ENCODE measurements at regions of chr6 and their contacts with region 1.

Region 1: DNA sequence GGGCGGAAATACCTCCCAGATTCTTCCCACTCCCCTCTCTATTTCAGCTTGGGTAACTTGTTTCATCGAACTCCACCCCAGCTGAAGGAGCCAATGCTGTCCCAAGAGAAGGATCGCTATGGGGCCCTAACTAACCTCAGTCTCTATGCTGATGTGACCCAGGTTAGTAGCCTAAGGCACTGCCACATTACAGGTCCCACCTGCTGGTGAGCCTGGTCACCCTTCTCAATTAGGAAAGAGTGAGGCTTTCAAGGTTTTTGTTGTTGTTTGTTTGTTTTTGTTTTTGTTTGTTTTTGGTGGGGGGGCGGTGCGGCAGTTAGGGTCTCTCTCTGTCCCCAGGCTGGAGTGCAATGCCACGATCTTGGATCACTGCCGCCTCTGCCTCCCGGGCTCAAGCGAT is 168.4 kb downstream of the OR2B2 start:
- DNase-seq: no peak
- H3K4me3 ChIP-seq: no peak overlapping the region
- H3K27me3 ChIP-seq: peaks cover 1% of the 10 kb centered on the region; the same call in 1 of the 2 replicates
- CTCF ChIP-seq: no peak

Region 2: GRCh38 chr6:27753668-27754407 is 10.0 kb after region 1 on chr6:
- CTCF ChIA-PET with region 1: interaction called, 13 read pairs
- POLR2A ChIA-PET with region 1: no interaction called
- DNase-seq: peak; percentile 16
- H3K4me3 ChIP-seq: peak overlapping the region; percentile 44
- H3K27me3 ChIP-seq: peaks cover 3% of the 10 kb centered on the region
- CTCF ChIP-seq: peak; percentile 27; the same call in 1 of the 2 replicates

Measured in BJ (cell line).